Colonic mucosa (tissue), 4 donors: ENCODE measurements at regions of chr1 and their contacts with region 1.

Region 1: GRCh38 chr1:245045087-245045881 is 109.5 kb upstream of the KIF26B start:
- DNase-seq: peak; percentile 84
- H3K4me3 ChIP-seq: no peak overlapping the region
- H3K27ac ChIP-seq: peak overlapping the region; percentile 38
- H3K4me1 ChIP-seq: no peaks in the 10 kb centered on the region
- H3K27me3 ChIP-seq: no peaks in the 10 kb centered on the region
- CTCF ChIP-seq: no peak

Region 2: GRCh38 chr1:244599937-244600350 is 445.3 kb before region 1 on chr1:
- intact Hi-C with region 1: loop called (anchors 5 kb)
- DNase-seq: no peak
- H3K4me3 ChIP-seq: no peak overlapping the region
- H3K27ac ChIP-seq: no peak overlapping the region
- H3K4me1 ChIP-seq: no peaks in the 10 kb centered on the region
- H3K27me3 ChIP-seq: no peaks in the 10 kb centered on the region
- CTCF ChIP-seq: no peak

Region 3: GRCh38 chr1:244712669-244713068 is 332.6 kb before region 1 on chr1:
- intact Hi-C with region 1: no loop called
- DNase-seq: no peak
- H3K4me3 ChIP-seq: no peak overlapping the region
- H3K27ac ChIP-seq: no peak overlapping the region
- H3K4me1 ChIP-seq: no peaks in the 10 kb centered on the region
- H3K27me3 ChIP-seq: no peaks in the 10 kb centered on the region
- CTCF ChIP-seq: no peak

Region 4: GRCh38 chr1:244796718-244797406 is 248.4 kb before region 1 on chr1:
- intact Hi-C with region 1: loop called (anchors 2 kb)
- DNase-seq: peak; percentile 73
- H3K4me3 ChIP-seq: no peak overlapping the region
- H3K27ac ChIP-seq: no peak overlapping the region
- H3K4me1 ChIP-seq: no peaks in the 10 kb centered on the region
- H3K27me3 ChIP-seq: no peaks in the 10 kb centered on the region
- CTCF ChIP-seq: peak; percentile 85

Region 5: GRCh38 chr1:244864253-244865027 is 180.8 kb before region 1 on chr1 and contains the start of gene HNRNPU:
- intact Hi-C with region 1: loop called (anchors 10 kb)
- DNase-seq: peak; percentile 96
- H3K4me3 ChIP-seq: peak within 1 kb of the TSS; percentile 90
- H3K27ac ChIP-seq: peak within 1 kb of the TSS; percentile 100
- H3K4me1 ChIP-seq: peaks cover 9% of the 10 kb centered on the region
- H3K27me3 ChIP-seq: no peaks in the 10 kb centered on the region
- CTCF ChIP-seq: no peak
- total RNA-seq, gene HNRNPU: 218 to 370 TPM

Region 6: DNA sequence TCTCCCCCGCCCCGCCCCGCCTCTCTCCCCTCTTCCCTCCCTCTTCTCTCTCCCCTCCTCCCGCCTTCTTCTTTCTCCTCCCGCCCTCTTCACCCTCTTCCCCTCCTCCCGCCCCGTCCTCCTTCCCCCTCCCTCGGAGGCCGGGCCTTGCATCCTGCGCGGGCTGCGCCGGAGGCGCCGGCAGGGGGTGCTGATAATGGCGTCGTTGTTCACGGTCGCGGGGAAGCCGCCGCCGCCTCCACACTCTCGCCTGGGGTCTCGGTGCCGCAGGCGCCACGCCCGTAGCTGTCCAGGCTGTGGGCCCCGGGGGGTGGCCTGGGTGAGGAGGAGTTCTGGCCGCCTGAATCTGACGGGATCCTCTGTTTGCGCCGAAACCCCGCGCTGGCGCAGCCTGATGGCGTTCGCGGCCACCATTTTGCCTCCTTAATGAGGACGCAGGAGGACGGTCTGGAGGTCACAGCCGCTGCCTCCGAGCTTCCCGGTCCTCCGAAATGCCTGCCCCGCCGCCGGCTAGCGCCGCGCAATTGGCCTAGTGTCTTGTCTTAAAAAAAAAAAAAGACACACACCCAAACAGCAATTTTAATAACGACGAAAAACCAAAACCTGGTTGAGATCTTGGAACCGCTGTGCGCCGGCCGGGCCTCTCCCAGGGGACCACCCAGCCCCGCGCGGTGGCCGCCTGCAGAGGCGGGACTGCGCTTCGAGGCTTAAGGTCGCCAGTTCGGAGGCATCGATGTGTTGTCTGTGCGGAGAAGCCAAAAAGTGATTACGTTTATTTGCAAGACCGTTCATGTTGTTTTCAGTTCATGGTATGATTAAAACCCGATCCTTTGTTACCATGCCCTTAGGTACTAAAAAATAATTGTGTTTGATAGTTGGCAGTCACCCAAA is 74.4 kb before region 1 on chr1:
- intact Hi-C with region 1: loop called (anchors 10 kb)
- DNase-seq: peak; percentile 94
- H3K4me3 ChIP-seq: peak overlapping the region; percentile 42
- H3K27ac ChIP-seq: peak overlapping the region; percentile 95
- H3K4me1 ChIP-seq: no peaks in the 10 kb centered on the region
- H3K27me3 ChIP-seq: no peaks in the 10 kb centered on the region
- CTCF ChIP-seq: peak; percentile 50